Panc1 (cell line): ENCODE measurements at regions of chr13 and their contacts with region 1.

Region 1: GRCh38 chr13:40069173-40070044 is 413.9 kb downstream of the COG6 start:
- DNase-seq: peak; percentile 32
- ATAC-seq: 0 out of 2 replicates have a peak, but pooled peaks have one; percentile 72
- H3K4me3 ChIP-seq: no peak overlapping the region
- H3K27ac ChIP-seq: no peak overlapping the region
- H3K4me1 ChIP-seq: no peaks in the 10 kb centered on the region
- H3K27me3 ChIP-seq: no peaks in the 10 kb centered on the region
- CTCF ChIP-seq: peak; percentile 74

Region 2: DNA sequence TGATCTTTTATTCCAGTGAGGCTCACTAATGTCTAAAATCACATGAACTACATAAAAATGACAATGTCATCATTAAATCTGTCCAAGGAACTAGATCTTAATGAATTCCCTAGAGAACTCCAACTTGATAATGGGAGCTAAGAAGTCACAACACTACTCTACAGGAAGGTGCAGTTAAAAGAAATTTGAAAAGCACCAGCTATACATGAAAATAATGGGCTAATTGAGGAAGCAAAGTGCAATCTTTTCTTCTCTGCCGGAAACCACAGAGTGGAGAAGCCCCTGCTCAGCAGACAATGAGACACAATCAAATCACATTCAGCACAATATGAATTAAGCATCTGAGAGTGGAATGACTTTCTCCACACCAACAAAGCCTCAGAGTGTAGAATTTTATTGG is 728.2 kb before region 1 on chr13:
- CTCF ChIA-PET with region 1: no interaction called
- POLR2A ChIA-PET with region 1: no interaction called
- in situ Hi-C with region 1: no loop called
- intact Hi-C with region 1: no loop called
- DNase-seq: no peak
- ATAC-seq: no peak
- H3K4me3 ChIP-seq: no peak overlapping the region
- H3K27ac ChIP-seq: no peak overlapping the region
- H3K4me1 ChIP-seq: no peaks in the 10 kb centered on the region
- H3K27me3 ChIP-seq: no peaks in the 10 kb centered on the region
- CTCF ChIP-seq: no peak

Region 3: GRCh38 chr13:40217675-40218074 is 148.3 kb after region 1 on chr13:
- CTCF ChIA-PET with region 1: no interaction called
- POLR2A ChIA-PET with region 1: no interaction called
- in situ Hi-C with region 1: no loop called
- intact Hi-C with region 1: loop called (anchors 5 kb)
- DNase-seq: no peak
- ATAC-seq: no peak
- H3K4me3 ChIP-seq: no peak overlapping the region
- H3K27ac ChIP-seq: no peak overlapping the region
- H3K4me1 ChIP-seq: no peaks in the 10 kb centered on the region
- H3K27me3 ChIP-seq: no peaks in the 10 kb centered on the region
- CTCF ChIP-seq: no peak

Region 4: GRCh38 chr13:41960639-41961465 is 1891.4 kb after region 1 on chr13 and contains the start of gene VWA8:
- CTCF ChIA-PET with region 1: no interaction called
- POLR2A ChIA-PET with region 1: no interaction called
- in situ Hi-C with region 1: no loop called
- intact Hi-C with region 1: no loop called
- DNase-seq: no peak
- ATAC-seq: peak; percentile 94
- H3K4me3 ChIP-seq: peak within 1 kb of the TSS; percentile 69 to 82
- H3K27ac ChIP-seq: peak within 1 kb of the TSS; percentile 95
- H3K4me1 ChIP-seq: peaks cover 11% of the 10 kb centered on the region; the same call in 1 of the 2 replicates
- H3K27me3 ChIP-seq: no peaks in the 10 kb centered on the region
- CTCF ChIP-seq: no peak
- total RNA-seq, gene VWA8: 11.2 TPM